Heart right ventricle (tissue), 16 donors: ENCODE measurements at regions of chr6 and their contacts with region 1.

Region 1: GRCh38 chr6:130322673-130323268 is 43.0 kb upstream of the TMEM200A start:
- DNase-seq: peak in 1 of 2 donors; percentile 24
- ATAC-seq: no peak
- H3K4me3 ChIP-seq: no peak overlapping the region
- H3K27ac ChIP-seq: no peak overlapping the region
- H3K4me1 ChIP-seq: no peaks in the 10 kb centered on the region
- H3K27me3 ChIP-seq: peaks cover 0 to 8% (median 0%) of the 10 kb centered on the region in 7 donors
- CTCF ChIP-seq: peak; percentile 62 to 87 (median 79)

Region 2: GRCh38 chr6:129908858-129909257 is 413.9 kb before region 1 on chr6:
- intact Hi-C with region 1: no loop called
- DNase-seq: no peak
- ATAC-seq: no peak
- H3K4me3 ChIP-seq: no peak overlapping the region
- H3K27ac ChIP-seq: no peak overlapping the region
- H3K4me1 ChIP-seq: no peaks in the 10 kb centered on the region
- H3K27me3 ChIP-seq: peaks cover 0 to 7% (median 0%) of the 10 kb centered on the region in 7 donors
- CTCF ChIP-seq: no peak

Region 3: DNA sequence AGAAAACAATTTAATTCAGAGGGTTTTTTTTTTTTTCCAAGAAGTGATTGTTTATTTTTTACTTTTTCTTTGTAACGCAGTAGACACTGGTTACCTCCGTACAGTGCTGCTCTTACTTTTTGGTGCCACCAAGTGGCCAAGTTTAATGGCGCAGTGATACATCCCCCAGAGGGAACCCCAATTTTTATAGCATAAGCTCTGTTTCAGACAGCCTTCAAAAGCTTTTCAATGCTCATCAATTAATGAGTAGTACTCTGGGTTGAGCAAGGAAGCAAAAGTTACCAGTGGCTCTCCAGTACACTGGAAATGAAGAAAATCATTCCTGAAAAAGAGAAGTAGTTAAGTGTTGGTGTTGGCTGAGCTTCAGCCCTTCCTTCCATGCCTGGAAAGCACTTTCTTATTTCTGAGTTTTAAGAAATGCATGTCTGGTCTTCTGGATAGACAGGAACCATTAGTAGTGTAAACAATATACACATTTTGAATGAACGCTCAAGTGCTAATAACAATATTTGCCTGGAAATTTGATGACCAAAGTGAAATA is 375.3 kb after region 1 on chr6:
- intact Hi-C with region 1: loop called in 5 of 10 experiments (anchors 2 to 10 kb)
- DNase-seq: peak in 1 of 2 donors; percentile 12
- ATAC-seq: peak in 2 of 8 donors; percentile 44 to 69
- H3K4me3 ChIP-seq: no peak overlapping the region
- H3K27ac ChIP-seq: no peak overlapping the region
- H3K4me1 ChIP-seq: no peaks in the 10 kb centered on the region
- H3K27me3 ChIP-seq: peaks cover 0 to 12% (median 0%) of the 10 kb centered on the region in 7 donors
- CTCF ChIP-seq: peak; percentile 27 to 68 (median 50)

Region 4: DNA sequence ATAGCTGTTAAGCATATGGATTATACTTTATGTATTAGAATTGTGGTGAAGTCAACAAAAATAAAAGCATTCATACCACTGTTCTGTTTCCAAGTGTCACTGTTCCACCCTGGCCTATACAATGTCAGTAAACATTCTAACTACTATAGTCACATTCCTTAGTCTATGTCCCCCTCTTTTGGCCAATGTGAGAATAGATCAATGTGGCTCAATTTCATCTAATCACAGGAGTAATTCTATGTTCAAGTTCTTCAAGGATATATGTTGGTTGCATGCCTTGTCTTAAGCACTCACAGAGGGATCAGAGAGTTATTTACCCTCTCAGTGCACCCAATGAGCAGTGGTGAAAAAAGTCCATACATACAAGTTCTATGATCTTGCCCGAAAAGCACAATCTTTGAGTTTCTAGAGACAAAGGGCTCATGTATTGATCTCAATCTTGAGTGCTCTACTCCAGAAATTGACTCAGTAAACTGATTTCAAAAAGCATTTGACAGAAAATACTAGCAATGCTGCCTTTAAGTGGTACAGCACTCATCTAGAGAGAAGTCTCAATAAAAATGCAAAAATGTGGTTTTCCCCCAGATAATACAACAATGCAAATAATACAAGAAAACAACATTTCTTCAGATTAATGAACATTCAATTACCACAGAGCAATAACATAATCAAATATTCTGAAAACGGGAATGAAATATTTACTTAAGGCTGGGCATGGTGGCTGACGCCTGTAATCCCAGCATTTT is 521.0 kb after region 1 on chr6:
- intact Hi-C with region 1: loop called in 3 of 10 experiments (anchors 10 kb)
- DNase-seq: no peak
- ATAC-seq: peak in 1 of 8 donors; percentile 48
- H3K4me3 ChIP-seq: no peak overlapping the region
- H3K27ac ChIP-seq: no peak overlapping the region
- H3K4me1 ChIP-seq: peaks cover 0 to 20% (median 6%) of the 10 kb centered on the region in 9 donors
- H3K27me3 ChIP-seq: no peaks in the 10 kb centered on the region
- CTCF ChIP-seq: peak in 7 of 9 donors; percentile 22 to 55 (median 47)

Region 5: DNA sequence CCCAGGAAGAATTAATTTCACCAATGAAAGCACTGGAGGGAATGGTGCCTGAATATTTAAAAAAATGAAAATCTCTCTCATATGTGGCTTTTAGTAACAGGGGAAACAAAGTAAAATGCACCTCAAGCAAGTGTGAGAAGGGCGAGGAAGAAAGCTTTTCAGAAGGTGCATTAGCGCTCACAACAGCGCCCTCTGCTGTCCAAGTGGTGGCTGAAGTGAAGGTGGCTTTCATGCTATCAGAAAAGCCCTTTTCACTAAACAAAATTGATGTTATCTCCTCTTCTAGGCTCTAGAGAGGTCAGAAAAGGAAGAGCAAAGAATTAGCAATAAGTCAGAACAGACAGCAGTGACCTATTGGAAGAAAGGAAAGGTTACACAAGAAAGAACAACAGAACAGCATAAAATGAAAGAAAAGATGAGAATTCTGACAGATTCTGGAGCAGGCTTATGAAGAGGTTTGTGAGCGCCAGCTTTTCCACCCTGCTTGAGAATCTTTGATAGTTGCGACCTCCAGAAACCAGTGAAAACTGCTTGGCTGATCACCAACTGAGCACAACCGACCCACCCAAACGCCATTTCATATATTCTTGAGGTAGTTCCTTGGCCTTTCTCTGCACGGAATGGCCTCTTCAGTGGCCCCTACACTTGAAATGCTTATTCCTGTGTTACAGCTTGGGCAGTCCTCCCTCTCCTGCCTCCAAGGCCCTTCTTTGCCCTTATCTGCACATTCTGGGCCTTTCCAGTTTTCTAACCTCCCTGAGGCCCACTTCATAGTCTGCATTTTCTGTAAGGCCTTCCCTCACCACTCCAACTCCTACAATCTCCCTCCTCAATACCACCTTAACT is 549.7 kb after region 1 on chr6:
- intact Hi-C with region 1: loop called in 9 of 10 experiments (anchors 2 to 10 kb)
- DNase-seq: peak; percentile 66 to 69
- ATAC-seq: peak in 4 of 8 donors; percentile 23 to 63 (median 54)
- H3K4me3 ChIP-seq: no peak overlapping the region
- H3K27ac ChIP-seq: no peak overlapping the region
- H3K4me1 ChIP-seq: no peaks in the 10 kb centered on the region
- H3K27me3 ChIP-seq: no peaks in the 10 kb centered on the region
- CTCF ChIP-seq: peak; percentile 55 to 92 (median 83)

Region 6: DNA sequence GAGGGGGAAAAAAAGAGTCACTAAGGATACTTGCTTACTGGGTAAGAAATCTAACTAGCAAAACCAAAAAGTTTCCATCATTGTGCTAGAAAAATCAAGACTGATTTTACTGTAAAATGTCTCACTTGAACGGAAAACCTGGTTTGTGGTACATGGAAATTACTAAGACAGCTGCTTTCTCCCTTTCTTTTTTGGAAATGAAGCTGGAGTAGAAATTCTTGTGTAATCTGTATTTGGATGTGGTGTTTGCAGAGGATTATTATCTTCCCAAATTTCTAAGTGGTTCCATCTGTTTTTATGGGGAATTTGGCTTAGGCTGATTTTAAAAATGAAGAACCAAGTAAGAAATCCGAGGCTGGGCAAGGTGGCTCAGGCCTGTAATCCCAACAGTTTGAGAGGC is 719.9 kb after region 1 on chr6:
- intact Hi-C with region 1: loop called in 1 of 10 experiments (anchors 5 kb)
- DNase-seq: no peak
- ATAC-seq: peak in 7 of 8 donors; percentile 39 to 81 (median 69)
- H3K4me3 ChIP-seq: no peak overlapping the region
- H3K27ac ChIP-seq: peak overlapping the region in 6 of 10 donors; percentile 9 to 43 (median 14)
- H3K4me1 ChIP-seq: peaks cover 0 to 31% (median 14%) of the 10 kb centered on the region in 9 donors
- H3K27me3 ChIP-seq: no peaks in the 10 kb centered on the region
- CTCF ChIP-seq: no peak

Region 7: GRCh38 chr6:131167773-131168172 is 845.0 kb after region 1 on chr6:
- intact Hi-C with region 1: loop called in 1 of 10 experiments (anchors 10 kb)
- DNase-seq: no peak
- ATAC-seq: no peak
- H3K4me3 ChIP-seq: no peak overlapping the region
- H3K27ac ChIP-seq: no peak overlapping the region
- H3K4me1 ChIP-seq: peaks cover 0 to 8% (median 0%) of the 10 kb centered on the region in 9 donors
- H3K27me3 ChIP-seq: no peaks in the 10 kb centered on the region
- CTCF ChIP-seq: peak in 6 of 9 donors; percentile 18 to 29 (median 24)

Region 8: DNA sequence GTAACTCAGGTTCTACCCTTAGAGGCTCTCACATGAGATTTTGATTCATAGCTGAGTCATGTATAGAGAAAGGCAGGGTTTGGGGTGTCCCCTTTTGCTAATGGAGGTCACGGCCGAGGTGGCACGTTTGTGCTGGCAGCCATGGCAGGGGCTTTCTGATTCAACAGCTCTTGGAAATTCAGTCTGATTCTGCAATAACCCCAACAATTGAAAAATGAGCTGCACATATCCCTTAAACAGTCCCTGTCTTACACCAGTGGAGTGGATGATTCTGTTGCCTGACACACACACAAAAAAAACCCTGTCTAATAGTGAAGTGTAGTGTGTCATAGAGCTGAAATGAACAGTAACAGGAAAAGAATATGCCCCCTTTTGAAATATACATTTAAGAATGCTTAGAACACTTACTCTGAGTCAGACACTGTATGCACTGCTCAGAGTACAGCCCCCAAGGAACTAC is 1209.8 kb after region 1 on chr6:
- intact Hi-C with region 1: loop called in 1 of 10 experiments (anchors 10 kb)
- DNase-seq: no peak
- ATAC-seq: no peak
- H3K4me3 ChIP-seq: no peak overlapping the region
- H3K27ac ChIP-seq: no peak overlapping the region
- H3K4me1 ChIP-seq: no peaks in the 10 kb centered on the region
- H3K27me3 ChIP-seq: peaks cover 0 to 6% (median 0%) of the 10 kb centered on the region in 7 donors
- CTCF ChIP-seq: no peak